ENCODE measurements at regions of chr2 and their contacts with region 1.

Region 1: DNA sequence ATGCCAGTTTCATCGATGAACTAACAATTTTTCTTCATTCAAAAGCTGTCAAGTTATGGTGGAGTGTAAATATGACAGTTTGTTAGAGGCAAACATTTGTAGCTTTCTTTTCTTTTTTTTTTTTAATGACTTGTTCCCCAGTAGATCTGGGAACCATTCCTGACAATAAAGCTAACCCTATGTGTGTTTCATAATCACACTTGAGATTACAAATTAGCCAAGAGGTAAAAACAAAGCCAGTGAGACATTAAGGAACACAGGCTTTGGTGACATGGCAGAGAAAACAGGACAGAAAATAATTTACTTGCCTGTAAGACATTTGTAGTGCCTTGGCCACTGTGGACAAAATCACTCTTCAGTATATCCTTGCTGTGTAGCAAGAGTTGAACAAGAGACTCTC is 135.8 kb downstream of the UBE2E3 start:
- DNase-seq: no peak
- ATAC-seq: no peak
- H3K4me3 ChIP-seq: no peak overlapping the region
- H3K4me3 Mint-ChIP-seq: no peak overlapping the region
- H3K27ac ChIP-seq: no peak overlapping the region
- H3K27ac Mint-ChIP-seq: no peak overlapping the region
- H3K4me1 ChIP-seq: no peaks in the 10 kb centered on the region
- H3K4me1 Mint-ChIP-seq: no peaks in the 10 kb centered on the region
- H3K27me3 ChIP-seq: no peaks in the 10 kb centered on the region
- H3K27me3 Mint-ChIP-seq: no peaks in the 10 kb centered on the region
- CTCF ChIP-seq: no peak

Region 2: GRCh38 chr2:181104512-181105115 is 11.6 kb before region 1 on chr2:
- CTCF ChIA-PET with region 1: interaction called, 13 read pairs
- POLR2A ChIA-PET with region 1: no interaction called
- intact Hi-C with region 1: no loop called
- DNase-seq: peak; percentile 65
- ATAC-seq: peak; percentile 41
- H3K4me3 ChIP-seq: no peak overlapping the region
- H3K4me3 Mint-ChIP-seq: no peak overlapping the region
- H3K27ac ChIP-seq: no peak overlapping the region
- H3K27ac Mint-ChIP-seq: no peak overlapping the region
- H3K4me1 ChIP-seq: no peaks in the 10 kb centered on the region
- H3K4me1 Mint-ChIP-seq: peaks cover 2% of the 10 kb centered on the region
- H3K27me3 ChIP-seq: no peaks in the 10 kb centered on the region
- H3K27me3 Mint-ChIP-seq: no peaks in the 10 kb centered on the region
- CTCF ChIP-seq: peak; percentile 81